CD4-positive, alpha-beta memory T cell (primary cell): ENCODE measurements at regions of chr1 and their contacts with region 1.

Region 1: GRCh38 chr1:21368515-21369289 is 71.2 kb upstream of the NBPF3 start:
- DNase-seq: peak in 4 of 5 donors; percentile 53 to 67 (median 56)
- H3K4me3 ChIP-seq: no peak overlapping the region
- H3K4me3 Mint-ChIP-seq: peak overlapping the region in 1 of 8 donors; percentile 51
- H3K27ac ChIP-seq: no peak overlapping the region
- H3K27ac Mint-ChIP-seq: peak overlapping the region in 3 of 7 donors; percentile 3 to 71 (median 23)
- H3K4me1 ChIP-seq: peaks cover 8% of the 10 kb centered on the region
- H3K4me1 Mint-ChIP-seq: peaks cover 9 to 16% (median 12%) of the 10 kb centered on the region in 4 donors
- H3K27me3 ChIP-seq: no peaks in the 10 kb centered on the region
- H3K27me3 Mint-ChIP-seq: no peaks in the 10 kb centered on the region

Region 2: GRCh38 chr1:21216835-21217811 is 151.6 kb before region 1 on chr1:
- CTCF ChIA-PET with region 1: interaction called, 57 read pairs
- POLR2A ChIA-PET with region 1: interaction called, 4 read pairs
- intact Hi-C with region 1: loop called (anchors 1 kb)
- DNase-seq: peak; percentile 56 to 70 (median 61)
- H3K4me3 ChIP-seq: no peak overlapping the region
- H3K4me3 Mint-ChIP-seq: no peak overlapping the region
- H3K27ac ChIP-seq: no peak overlapping the region
- H3K27ac Mint-ChIP-seq: peak overlapping the region in 6 of 7 donors; percentile 27 to 80 (median 68)
- H3K4me1 ChIP-seq: no peaks in the 10 kb centered on the region
- H3K4me1 Mint-ChIP-seq: peaks cover 2 to 9% (median 4%) of the 10 kb centered on the region in 4 donors
- H3K27me3 ChIP-seq: no peaks in the 10 kb centered on the region
- H3K27me3 Mint-ChIP-seq: no peaks in the 10 kb centered on the region

Region 3: GRCh38 chr1:21238141-21238800 is 130.4 kb before region 1 on chr1:
- CTCF ChIA-PET with region 1: interaction called, 242 read pairs
- POLR2A ChIA-PET with region 1: no interaction called
- intact Hi-C with region 1: no loop called
- DNase-seq: no peak
- H3K4me3 ChIP-seq: no peak overlapping the region
- H3K4me3 Mint-ChIP-seq: no peak overlapping the region
- H3K27ac ChIP-seq: no peak overlapping the region
- H3K27ac Mint-ChIP-seq: peak overlapping the region in 1 of 7 donors; percentile 29
- H3K4me1 ChIP-seq: no peaks in the 10 kb centered on the region
- H3K4me1 Mint-ChIP-seq: no peaks in the 10 kb centered on the region
- H3K27me3 ChIP-seq: no peaks in the 10 kb centered on the region
- H3K27me3 Mint-ChIP-seq: no peaks in the 10 kb centered on the region

Region 4: DNA sequence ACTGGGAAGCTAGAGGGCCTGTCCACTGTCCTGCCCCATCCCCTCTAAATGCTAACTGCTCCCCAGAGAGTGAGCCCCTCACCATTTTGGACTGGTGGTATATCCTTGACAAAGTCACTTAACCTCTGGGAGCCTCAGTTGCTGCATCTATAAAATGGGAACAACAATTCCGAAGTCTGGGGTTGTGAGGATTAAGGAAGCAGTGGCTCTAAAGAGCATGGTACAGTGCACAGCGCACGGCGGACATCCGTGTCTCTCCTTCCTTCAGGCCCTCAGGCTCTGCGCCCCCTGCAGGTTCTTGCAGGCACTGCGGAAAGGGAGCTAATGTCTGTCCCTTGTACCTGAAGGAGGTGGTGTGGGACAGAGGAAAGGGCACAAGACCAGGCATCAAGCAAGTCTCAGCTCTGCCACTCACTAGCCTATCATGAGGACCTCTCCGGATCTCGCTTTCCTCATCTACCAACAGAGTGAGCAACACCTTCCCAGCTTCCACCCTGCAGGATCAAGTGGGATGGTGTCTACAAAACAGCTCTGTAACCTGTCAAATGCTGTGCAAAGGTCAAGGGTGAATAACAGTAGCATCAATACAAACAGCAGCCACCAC is 98.5 kb before region 1 on chr1:
- CTCF ChIA-PET with region 1: interaction called, 132 read pairs
- POLR2A ChIA-PET with region 1: interaction called, 6 read pairs
- intact Hi-C with region 1: loop called (anchors 1 kb)
- DNase-seq: peak; percentile 73 to 82 (median 79)
- H3K4me3 ChIP-seq: no peak overlapping the region
- H3K4me3 Mint-ChIP-seq: peak overlapping the region in 1 of 8 donors; percentile 16
- H3K27ac ChIP-seq: no peak overlapping the region
- H3K27ac Mint-ChIP-seq: peak overlapping the region; percentile 28 to 80 (median 73)
- H3K4me1 ChIP-seq: peaks cover 18% of the 10 kb centered on the region
- H3K4me1 Mint-ChIP-seq: peaks cover 16 to 41% (median 29%) of the 10 kb centered on the region in 4 donors
- H3K27me3 ChIP-seq: no peaks in the 10 kb centered on the region
- H3K27me3 Mint-ChIP-seq: no peaks in the 10 kb centered on the region

Region 5: GRCh38 chr1:21294266-21294989 is 74.3 kb before region 1 on chr1:
- CTCF ChIA-PET with region 1: interaction called, 24 read pairs
- POLR2A ChIA-PET with region 1: interaction called, 16 read pairs
- intact Hi-C with region 1: no loop called
- DNase-seq: peak; percentile 93 to 99 (median 97)
- H3K4me3 ChIP-seq: peak overlapping the region; percentile 79 to 81
- H3K4me3 Mint-ChIP-seq: peak overlapping the region; percentile 86 to 99 (median 94)
- H3K27ac ChIP-seq: peak overlapping the region; percentile 99
- H3K27ac Mint-ChIP-seq: peak overlapping the region; percentile 96 to 100 (median 99)
- H3K4me1 ChIP-seq: peaks cover 84% of the 10 kb centered on the region
- H3K4me1 Mint-ChIP-seq: peaks cover 42 to 95% (median 69%) of the 10 kb centered on the region in 4 donors
- H3K27me3 ChIP-seq: no peaks in the 10 kb centered on the region
- H3K27me3 Mint-ChIP-seq: no peaks in the 10 kb centered on the region

Region 6: GRCh38 chr1:21334214-21335087 is 34.3 kb before region 1 on chr1:
- CTCF ChIA-PET with region 1: interaction called, 35 read pairs
- POLR2A ChIA-PET with region 1: interaction called, 6 read pairs
- intact Hi-C with region 1: loop called (anchors 1 kb)
- DNase-seq: peak; percentile 87 to 93 (median 89)
- H3K4me3 ChIP-seq: peak overlapping the region; percentile 17 to 44
- H3K4me3 Mint-ChIP-seq: peak overlapping the region; percentile 80 to 94 (median 90)
- H3K27ac ChIP-seq: peak overlapping the region; percentile 82
- H3K27ac Mint-ChIP-seq: peak overlapping the region; percentile 92 to 99 (median 98)
- H3K4me1 ChIP-seq: peaks cover 94% of the 10 kb centered on the region
- H3K4me1 Mint-ChIP-seq: peaks cover 62 to 98% (median 81%) of the 10 kb centered on the region in 4 donors
- H3K27me3 ChIP-seq: no peaks in the 10 kb centered on the region
- H3K27me3 Mint-ChIP-seq: no peaks in the 10 kb centered on the region

Region 7: DNA sequence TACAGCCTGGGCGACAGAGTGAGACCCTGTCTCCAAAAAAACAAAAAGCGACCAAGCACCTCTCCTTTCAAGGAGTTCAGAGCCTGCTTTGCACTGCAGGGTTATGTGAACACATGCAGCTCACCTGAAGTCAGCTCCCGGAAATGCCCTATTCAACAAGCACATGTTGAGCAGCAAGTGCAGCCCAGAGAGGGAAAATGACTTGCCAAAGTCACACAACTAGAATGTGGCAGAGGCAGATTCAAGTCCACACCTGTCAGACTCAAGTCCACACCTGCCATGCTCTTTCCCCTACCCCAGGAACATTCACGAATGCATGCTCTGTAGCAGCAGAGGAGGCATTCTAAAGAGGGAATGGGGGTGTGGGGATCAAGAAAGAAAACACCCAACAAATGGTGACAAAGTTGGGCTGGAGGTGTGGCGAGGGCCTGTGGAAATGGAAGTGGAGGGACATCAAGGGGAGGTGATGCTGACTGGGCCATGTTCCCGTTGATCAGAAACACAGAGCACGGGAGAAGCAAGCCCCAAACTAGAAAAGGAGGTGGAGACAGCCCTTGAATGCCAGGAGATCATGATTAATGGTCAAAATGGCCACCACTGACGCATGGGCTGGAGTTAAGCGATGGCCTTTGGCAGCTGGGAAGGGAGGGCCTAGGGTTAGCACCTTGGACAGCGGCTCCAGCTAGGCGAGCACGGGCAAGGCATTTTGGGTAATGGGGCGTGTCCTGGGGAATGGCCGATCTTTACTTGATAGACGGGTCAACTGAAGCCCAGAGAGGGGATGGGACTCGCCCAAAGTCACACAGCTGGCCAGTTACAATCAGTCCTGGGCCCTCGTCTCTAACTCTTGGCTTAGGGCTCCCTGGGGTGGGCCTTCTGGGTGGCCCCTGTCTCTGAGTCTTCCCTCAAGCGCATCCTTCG is 279.0 kb after region 1 on chr1:
- CTCF ChIA-PET with region 1: no interaction called
- POLR2A ChIA-PET with region 1: no interaction called
- intact Hi-C with region 1: no loop called
- DNase-seq: peak in 1 of 5 donors; percentile 17
- H3K4me3 ChIP-seq: no peak overlapping the region
- H3K4me3 Mint-ChIP-seq: peak overlapping the region in 1 of 8 donors; percentile 21
- H3K27ac ChIP-seq: no peak overlapping the region
- H3K27ac Mint-ChIP-seq: no peak overlapping the region
- H3K4me1 ChIP-seq: peaks cover 8% of the 10 kb centered on the region
- H3K4me1 Mint-ChIP-seq: peaks cover 7 to 20% (median 12%) of the 10 kb centered on the region in 4 donors
- H3K27me3 ChIP-seq: no peaks in the 10 kb centered on the region
- H3K27me3 Mint-ChIP-seq: peaks cover 13 to 19% of the 10 kb centered on the region in 2 donors